ENCODE measurements at regions of chr17 and their contacts with region 1.

Region 1: GRCh38 chr17:72556944-72557826 is 436.4 kb downstream of the SOX9 start:
- DNase-seq: peak; percentile 84
- CTCF ChIP-seq: peak; percentile 80

Region 2: GRCh38 chr17:72529386-72529785 is 27.8 kb before region 1 on chr17:
- CTCF ChIA-PET with region 1: no interaction called
- POLR2A ChIA-PET with region 1: no interaction called
- DNase-seq: no peak
- CTCF ChIP-seq: no peak

Region 3: DNA sequence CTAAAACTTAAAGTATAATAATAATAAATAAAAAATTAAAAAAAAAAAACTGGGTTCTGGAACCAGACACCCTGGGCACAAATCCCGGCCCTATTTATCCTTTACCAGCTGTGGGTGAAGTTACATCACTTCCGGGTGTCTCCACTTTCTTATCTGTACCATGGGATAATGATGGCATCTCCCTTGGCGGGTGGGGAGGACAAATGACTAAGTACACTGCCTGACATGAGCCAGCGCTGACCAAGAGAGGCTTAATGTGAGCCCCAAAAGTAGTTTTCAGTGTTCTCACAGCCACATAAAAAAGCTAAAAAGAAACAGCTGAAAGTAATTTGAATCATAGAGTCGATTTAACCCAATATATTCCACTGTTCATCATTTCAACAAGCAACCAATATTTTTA is 11.4 kb before region 1 on chr17:
- CTCF ChIA-PET with region 1: interaction called, 24 read pairs
- POLR2A ChIA-PET with region 1: no interaction called
- DNase-seq: no peak
- CTCF ChIP-seq: no peak

Region 4: GRCh38 chr17:72580321-72581127 is 23.3 kb after region 1 on chr17:
- CTCF ChIA-PET with region 1: interaction called, 25 read pairs
- POLR2A ChIA-PET with region 1: no interaction called
- DNase-seq: no peak
- CTCF ChIP-seq: no peak

Region 5: GRCh38 chr17:73156166-73156840 is 599.1 kb after region 1 on chr17:
- CTCF ChIA-PET with region 1: interaction called, 11 read pairs
- POLR2A ChIA-PET with region 1: no interaction called
- DNase-seq: peak; percentile 81
- CTCF ChIP-seq: peak; percentile 83

Region 6: DNA sequence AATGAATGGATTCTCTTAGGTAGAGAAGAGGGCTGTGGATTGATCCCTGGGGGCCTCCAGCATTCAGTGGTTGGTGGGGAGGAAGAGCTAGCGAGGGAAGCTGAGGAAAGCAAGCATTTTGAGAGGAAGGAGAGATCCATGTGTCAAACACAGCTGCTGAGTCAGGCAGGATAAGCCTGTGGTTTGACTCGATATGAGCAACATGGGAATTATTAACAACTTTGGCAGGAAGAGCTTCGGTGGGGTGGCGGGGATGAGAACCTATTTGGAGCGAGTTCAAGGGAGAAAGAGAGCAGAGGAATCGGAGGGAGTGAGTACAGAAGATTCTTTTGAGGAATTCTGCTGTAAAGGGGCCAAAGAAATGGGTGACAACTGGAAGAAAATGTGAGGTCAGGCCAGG is 814.1 kb after region 1 on chr17:
- CTCF ChIA-PET with region 1: interaction called, 28 read pairs
- POLR2A ChIA-PET with region 1: no interaction called
- DNase-seq: no peak
- CTCF ChIP-seq: no peak